ENCODE measurements at regions of chr2 and their contacts with region 1.

Region 1: DNA sequence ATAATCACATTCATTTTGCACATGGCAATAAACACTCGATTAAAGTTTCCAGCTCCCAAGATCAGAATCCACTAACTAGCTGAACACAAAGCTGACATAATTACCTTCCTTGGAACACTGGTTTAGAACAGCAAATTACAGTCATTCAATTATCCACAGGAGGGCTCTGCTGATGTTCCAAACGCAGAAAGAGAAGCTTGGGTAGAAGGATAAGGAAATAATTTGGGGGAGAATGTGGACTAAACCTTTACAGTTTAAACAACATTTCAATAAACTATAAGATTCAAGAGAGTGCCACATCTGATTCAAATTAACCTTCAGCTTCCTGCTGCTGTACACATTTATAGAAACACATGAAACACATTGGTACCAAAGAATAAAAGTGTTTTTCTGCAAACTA is 67.8 kb upstream of the ARL4C start:
- DNase-seq: no peak
- H3K4me3 ChIP-seq: no peak overlapping the region
- H3K27ac ChIP-seq: no peak overlapping the region
- H3K4me1 ChIP-seq: no peaks in the 10 kb centered on the region
- H3K27me3 ChIP-seq: no peaks in the 10 kb centered on the region
- CTCF ChIP-seq: no peak
- EP300 ChIP-seq: no peak
- POLR2A ChIP-seq: no peak
- RAD21 ChIP-seq: peak; percentile 15 to 38; a peak in 3 of 4 replicates

Region 2: DNA sequence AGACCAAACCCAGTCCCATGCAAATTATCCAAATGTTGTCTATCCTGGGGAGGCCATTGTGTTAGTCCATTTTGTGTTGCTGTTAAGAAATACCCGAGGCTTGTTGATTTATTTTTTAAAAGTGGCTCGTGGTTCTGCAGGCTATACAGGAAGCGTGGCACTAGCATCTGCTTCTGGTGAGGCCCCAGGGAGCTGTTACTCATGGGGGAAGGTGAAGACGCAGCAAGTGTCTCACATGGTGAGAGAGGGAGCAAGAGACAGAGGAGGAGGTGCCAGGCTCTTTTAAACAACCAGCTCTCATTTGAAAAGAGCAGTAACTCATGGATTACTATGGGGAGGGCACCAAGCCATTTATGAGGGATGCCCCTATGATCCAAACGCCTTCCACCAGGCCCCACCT is 12.5 kb after region 1 on chr2:
- CTCF ChIA-PET with region 1: interaction called, 15 read pairs
- POLR2A ChIA-PET with region 1: no interaction called
- DNase-seq: no peak
- H3K4me3 ChIP-seq: no peak overlapping the region
- H3K27ac ChIP-seq: no peak overlapping the region
- H3K4me1 ChIP-seq: peaks cover 0 to 16% (median 10%) of the 10 kb centered on the region in 4 experiments; a peak in 4 of 7 replicates
- H3K27me3 ChIP-seq: no peaks in the 10 kb centered on the region; a peak in 1 of 7 replicates
- CTCF ChIP-seq: no peak
- EP300 ChIP-seq: no peak
- POLR2A ChIP-seq: no peak
- RAD21 ChIP-seq: no peak

Measured in H1 (cell line).